MCF 10A (cell line): ENCODE measurements at regions of chr1 and their contacts with region 1.

Region 1: DNA sequence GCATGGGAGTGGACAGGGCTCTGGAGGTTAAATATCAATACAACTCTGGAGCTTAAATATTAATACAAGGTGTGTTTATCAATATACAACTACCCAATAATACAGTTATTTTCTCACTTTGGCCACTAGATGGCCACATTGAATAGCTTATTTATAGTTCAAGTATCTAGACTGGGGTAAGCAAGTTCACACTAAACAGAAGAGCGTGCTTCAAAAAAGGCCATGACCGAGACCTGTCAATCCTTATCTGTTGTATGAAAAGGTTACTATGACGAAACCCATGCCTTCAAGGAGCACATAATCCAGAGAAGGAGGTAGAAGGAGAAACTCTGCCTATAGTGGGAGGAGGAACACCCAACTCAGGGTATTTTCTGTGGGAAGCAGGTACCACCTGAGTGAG is 29.1 kb downstream of the CHML start:
- DNase-seq: peak; percentile 92
- H3K4me3 Mint-ChIP-seq: no peak overlapping the region
- H3K27ac Mint-ChIP-seq: no peak overlapping the region
- H3K4me1 Mint-ChIP-seq: peaks cover 42% of the 10 kb centered on the region
- H3K27me3 Mint-ChIP-seq: no peaks in the 10 kb centered on the region
- CTCF ChIP-seq: peak; percentile 78

Region 2: GRCh38 chr1:241531195-241532161 is 79.6 kb before region 1 on chr1:
- CTCF ChIA-PET with region 1: interaction called, 84 read pairs
- POLR2A ChIA-PET with region 1: interaction called, 28 read pairs
- intact Hi-C with region 1: loop called (anchors 1 kb)
- DNase-seq: peak; percentile 91
- H3K4me3 Mint-ChIP-seq: peak overlapping the region; percentile 74
- H3K27ac Mint-ChIP-seq: peak overlapping the region; percentile 80
- H3K4me1 Mint-ChIP-seq: peaks cover 21% of the 10 kb centered on the region
- H3K27me3 Mint-ChIP-seq: no peaks in the 10 kb centered on the region
- CTCF ChIP-seq: peak; percentile 77

Region 3: GRCh38 chr1:241627453-241628259 is 16.6 kb after region 1 on chr1:
- CTCF ChIA-PET with region 1: interaction called, 173 read pairs
- POLR2A ChIA-PET with region 1: interaction called, 35 read pairs
- intact Hi-C with region 1: loop called (anchors 1 kb)
- DNase-seq: peak; percentile 92
- H3K4me3 Mint-ChIP-seq: no peak overlapping the region
- H3K27ac Mint-ChIP-seq: peak overlapping the region; percentile 52
- H3K4me1 Mint-ChIP-seq: peaks cover 58% of the 10 kb centered on the region
- H3K27me3 Mint-ChIP-seq: no peaks in the 10 kb centered on the region
- CTCF ChIP-seq: peak; percentile 80

Region 4: GRCh38 chr1:241799416-241799815 is 188.4 kb after region 1 on chr1:
- CTCF ChIA-PET with region 1: interaction called, 14 read pairs
- POLR2A ChIA-PET with region 1: no interaction called
- intact Hi-C with region 1: loop called (anchors 1 kb)
- DNase-seq: peak; percentile 51
- H3K4me3 Mint-ChIP-seq: no peak overlapping the region
- H3K27ac Mint-ChIP-seq: peak overlapping the region; percentile 8
- H3K4me1 Mint-ChIP-seq: peaks cover 23% of the 10 kb centered on the region
- H3K27me3 Mint-ChIP-seq: no peaks in the 10 kb centered on the region
- CTCF ChIP-seq: no peak

Region 5: GRCh38 chr1:241842565-241842964 is 231.5 kb after region 1 on chr1:
- CTCF ChIA-PET with region 1: interaction called, 110 read pairs
- POLR2A ChIA-PET with region 1: interaction called, 27 read pairs
- intact Hi-C with region 1: no loop called
- DNase-seq: no peak
- H3K4me3 Mint-ChIP-seq: no peak overlapping the region
- H3K27ac Mint-ChIP-seq: no peak overlapping the region
- H3K4me1 Mint-ChIP-seq: peaks cover 16% of the 10 kb centered on the region
- H3K27me3 Mint-ChIP-seq: no peaks in the 10 kb centered on the region
- CTCF ChIP-seq: no peak

Region 6: DNA sequence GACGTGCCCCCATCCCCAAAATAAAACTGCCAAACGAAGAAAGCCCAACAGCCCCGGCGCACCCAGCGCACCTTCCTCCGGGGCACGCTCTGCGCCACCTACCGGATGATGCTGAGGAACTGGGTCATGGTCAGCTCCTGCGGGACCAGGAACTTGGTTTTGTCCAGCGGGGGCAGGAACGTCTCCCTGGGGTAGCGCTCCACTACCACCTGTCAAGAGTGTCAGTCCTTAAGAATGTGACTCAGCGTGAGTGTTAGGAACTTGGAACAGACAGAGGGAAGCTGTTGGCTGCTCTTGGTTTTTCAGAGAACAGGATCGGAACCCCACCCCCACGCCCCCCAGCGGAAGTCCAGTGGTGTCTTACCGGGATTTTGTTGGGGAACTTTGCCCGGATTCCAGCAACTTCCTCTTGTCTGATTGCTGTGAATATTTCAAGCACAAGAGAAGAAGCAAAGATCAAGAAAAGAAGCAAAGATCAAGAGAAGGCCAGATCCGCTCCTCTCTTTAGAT is 387.4 kb after region 1 on chr1:
- CTCF ChIA-PET with region 1: interaction called, 12 read pairs
- POLR2A ChIA-PET with region 1: interaction called, 3 read pairs
- intact Hi-C with region 1: loop called (anchors 1 kb)
- DNase-seq: peak; percentile 93
- H3K4me3 Mint-ChIP-seq: peak overlapping the region; percentile 62
- H3K27ac Mint-ChIP-seq: no peak overlapping the region
- H3K4me1 Mint-ChIP-seq: peaks cover 7% of the 10 kb centered on the region
- H3K27me3 Mint-ChIP-seq: no peaks in the 10 kb centered on the region
- CTCF ChIP-seq: peak; percentile 89